Cardiac septum (tissue), 1 donor: ENCODE measurements at regions of chr11 and their contacts with region 1.

Region 1: DNA sequence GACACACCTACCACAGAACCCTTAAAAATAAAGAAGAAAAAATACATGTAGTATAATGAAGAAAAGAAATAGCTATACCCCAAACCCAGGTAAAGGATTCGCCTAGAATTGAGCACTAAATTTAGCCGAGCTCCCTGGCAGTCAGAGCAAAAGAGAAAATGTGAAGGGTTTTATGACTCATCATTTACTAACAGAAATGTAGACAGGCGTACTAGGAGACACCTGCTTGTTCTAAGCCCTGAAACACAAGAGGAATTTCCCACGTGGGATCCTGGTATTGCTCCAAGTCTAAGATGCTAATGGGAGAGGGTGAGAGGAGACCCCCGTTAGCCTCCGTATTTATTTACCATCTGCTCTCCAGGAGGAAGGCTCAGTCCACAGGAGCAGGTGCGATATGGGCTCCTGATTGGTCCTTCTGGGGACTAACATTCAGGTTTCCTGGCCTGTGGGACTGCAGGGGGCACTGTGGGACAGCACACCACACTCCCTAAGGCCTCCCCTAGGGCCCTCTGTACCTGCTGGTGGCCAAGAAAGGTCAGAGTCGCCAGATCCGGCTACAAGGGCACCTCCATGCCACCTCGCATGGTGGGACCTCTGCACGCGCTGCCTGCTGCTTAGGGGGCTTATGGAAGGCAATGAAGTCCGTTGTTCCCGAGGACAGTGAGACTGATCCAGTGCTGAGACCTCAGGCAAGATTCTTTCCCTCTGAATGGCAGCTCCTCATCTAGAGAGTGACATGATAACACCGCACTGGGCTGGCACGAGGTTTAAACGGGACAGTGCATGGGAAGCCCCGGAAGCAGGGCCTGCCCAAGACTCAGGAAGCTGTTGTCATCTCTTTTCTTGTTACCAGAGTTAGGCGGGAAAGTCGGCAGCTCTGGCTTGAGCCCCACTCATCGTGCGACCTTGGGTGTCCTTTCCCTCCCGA is 25.8 kb downstream of the KCNC1 start:
- DNase-seq: no peak

Region 2: GRCh38 chr11:17821648-17822400 is 61.5 kb after region 1 on chr11:
- intact Hi-C with region 1: no loop called
- DNase-seq: no peak

Region 3: GRCh38 chr11:17846852-17847453 is 86.6 kb after region 1 on chr11:
- intact Hi-C with region 1: loop called (anchors 5 kb)
- DNase-seq: no peak